Adrenal gland (tissue), 19 donors: ENCODE measurements at regions of chr12 and their contacts with region 1.

Region 1: DNA sequence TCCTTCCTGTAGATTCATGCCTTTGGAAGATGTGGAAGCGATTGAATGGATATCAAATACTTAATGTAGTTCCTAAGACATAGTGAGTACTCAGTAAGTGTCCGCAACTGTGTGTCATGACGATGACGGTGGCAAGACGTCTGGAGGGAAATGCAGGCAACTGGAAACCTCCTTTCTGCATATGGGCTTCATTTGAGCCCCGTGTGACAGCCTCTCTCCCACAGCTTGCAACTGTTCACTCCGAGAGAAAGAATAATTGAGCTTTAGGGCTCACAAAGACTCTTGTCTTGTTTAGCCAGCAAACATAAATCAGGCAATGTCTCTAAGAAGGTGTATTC is 6.9 kb downstream of the CFAP251 start:
- DNase-seq: no peak
- H3K4me3 ChIP-seq: no peak overlapping the region
- H3K27ac ChIP-seq: peak overlapping the region in 2 of 5 donors; percentile 66 to 69
- H3K4me1 ChIP-seq: peaks cover 0 to 7% of the 10 kb centered on the region in 2 donors
- H3K27me3 ChIP-seq: no peaks in the 10 kb centered on the region
- CTCF ChIP-seq: no peak
- POLR2A ChIP-seq: no peak

Region 2: DNA sequence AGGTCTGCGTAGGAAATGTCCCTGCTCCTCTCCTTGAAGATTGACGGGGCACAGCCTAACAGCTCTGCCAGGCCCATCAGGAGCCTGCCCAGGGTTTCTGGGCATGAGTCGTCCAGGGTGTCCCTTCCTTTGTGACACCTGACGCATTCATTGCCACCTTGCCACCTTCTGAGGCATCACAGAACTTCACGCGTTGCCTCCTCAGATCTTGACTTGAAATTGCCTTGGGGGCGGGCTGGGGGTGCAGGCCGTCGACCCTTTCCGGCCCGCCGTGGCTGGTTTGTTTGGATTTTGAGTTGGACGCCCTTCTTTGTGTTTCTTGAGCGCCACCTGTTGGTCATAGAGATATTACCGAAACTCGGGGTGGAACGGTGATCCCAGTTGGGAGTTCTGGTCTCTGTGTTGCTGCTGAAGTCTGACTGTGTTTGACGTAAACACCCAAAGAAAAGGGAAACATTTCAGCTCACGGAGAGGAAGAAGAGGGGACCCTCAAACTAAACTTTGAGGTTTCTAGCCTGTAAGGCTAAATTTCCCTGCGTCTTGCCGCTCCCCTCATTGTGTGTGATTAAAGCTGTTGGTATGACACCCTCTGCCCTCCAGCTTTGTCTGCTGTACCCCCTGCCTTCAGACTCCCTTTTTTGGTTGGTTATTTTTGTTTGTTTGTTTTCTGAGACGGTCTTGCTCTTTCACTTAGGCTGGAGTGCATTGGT is 197.9 kb after region 1 on chr12:
- intact Hi-C with region 1: loop called in 1 of 2 experiments (anchors 10 kb)
- DNase-seq: peak; percentile 62 to 88 (median 74)
- H3K4me3 ChIP-seq: no peak overlapping the region
- H3K27ac ChIP-seq: peak overlapping the region in 3 of 5 donors; percentile 33 to 52 (median 36)
- H3K4me1 ChIP-seq: peaks cover 0 to 45% of the 10 kb centered on the region in 2 donors
- H3K27me3 ChIP-seq: no peaks in the 10 kb centered on the region
- CTCF ChIP-seq: peak; percentile 76 to 91 (median 81)
- POLR2A ChIP-seq: no peak

Region 3: DNA sequence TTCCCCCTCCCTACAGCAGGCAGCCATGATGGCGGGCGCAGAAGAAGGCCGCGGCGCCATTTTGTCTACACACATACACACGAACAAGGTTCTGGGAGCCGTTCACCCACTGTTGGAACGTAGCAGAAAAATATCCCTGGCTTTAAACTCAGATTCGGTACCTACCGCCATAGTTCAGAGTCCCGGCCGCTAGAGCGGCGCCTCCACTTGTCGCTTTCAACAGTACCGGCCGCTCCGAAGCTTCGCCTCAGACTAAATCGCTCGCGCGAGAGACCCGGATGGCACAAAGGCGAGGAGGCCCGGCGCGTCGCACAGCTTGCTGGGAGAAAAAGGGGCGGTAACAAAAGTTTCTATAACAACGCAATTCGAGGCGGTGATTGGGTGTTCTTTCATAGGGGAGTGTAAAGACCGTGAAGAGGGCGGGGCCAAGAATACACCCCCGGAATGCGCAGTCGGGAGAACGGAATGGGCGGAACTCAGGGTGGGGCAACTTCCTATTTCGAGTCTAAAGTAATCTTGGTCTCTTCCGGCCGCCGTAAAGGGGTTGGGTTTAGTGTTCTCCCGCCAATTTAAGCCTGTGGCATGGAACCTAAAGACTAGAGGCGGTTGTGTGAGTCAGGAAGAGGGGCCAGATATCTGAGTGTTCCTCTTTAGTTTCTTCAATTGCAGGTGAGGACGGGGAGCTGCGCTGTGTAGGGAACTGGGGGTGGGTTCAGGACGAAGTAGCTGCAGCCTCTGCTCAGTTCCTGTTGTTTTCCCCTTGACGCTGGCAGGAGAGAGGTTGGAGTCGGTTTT is 601.6 kb after region 1 on chr12 and contains the starts of genes KNTC1 and RSRC2:
- intact Hi-C with region 1: no loop called
- DNase-seq: peak; percentile 99 to 100 (median 99)
- H3K4me3 ChIP-seq: peak within 1 kb of the TSS in 3 of 4 donors; percentile 67 to 100 (median 91)
- H3K27ac ChIP-seq: peak within 1 kb of the TSS; percentile 91 to 100 (median 99)
- H3K4me1 ChIP-seq: peaks cover 38 to 40% of the 10 kb centered on the region in 2 donors
- H3K27me3 ChIP-seq: no peaks in the 10 kb centered on the region
- CTCF ChIP-seq: no peak
- POLR2A ChIP-seq: peak; percentile 98 to 99
- total RNA-seq, gene KNTC1: 5.7 to 38.5 (median 11.4) TPM
- total RNA-seq, gene RSRC2: 25.6 to 117 (median 59.5) TPM